Activated CD4-positive, alpha-beta T cell treated with anti-CD3 and anti-CD28 coated beads for 36 hours (primary cell): ENCODE measurements at regions of chr14 and their contacts with region 1.

Region 1: GRCh38 chr14:96741151-96741977 is 55.8 kb upstream of the VRK1 start:
- DNase-seq: peak; percentile 88
- ATAC-seq: peak; percentile 90
- H3K4me3 Mint-ChIP-seq: peak overlapping the region; percentile 47
- H3K27ac Mint-ChIP-seq: no peak overlapping the region
- H3K4me1 Mint-ChIP-seq: no peaks in the 10 kb centered on the region
- H3K27me3 Mint-ChIP-seq: peaks cover 50% of the 10 kb centered on the region

Region 2: DNA sequence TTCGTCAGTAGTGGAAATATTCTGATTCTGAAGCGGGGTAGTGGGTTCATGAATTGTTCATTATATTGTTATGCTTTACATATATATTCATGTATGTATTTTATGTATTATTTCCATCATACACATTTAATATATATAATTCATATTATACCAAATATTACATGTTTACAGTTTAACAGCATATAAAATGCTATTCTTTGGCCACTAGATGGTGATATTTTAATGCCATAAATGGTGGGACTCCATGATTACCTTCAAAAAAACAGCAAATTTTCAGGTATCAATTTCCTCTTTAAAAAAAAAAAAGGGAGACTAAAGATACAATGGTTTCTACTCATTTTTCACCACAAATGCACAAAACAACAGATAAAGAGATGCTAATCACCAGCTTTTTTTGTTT is 444.4 kb before region 1 on chr14:
- CTCF ChIA-PET with region 1: no interaction called
- POLR2A ChIA-PET with region 1: no interaction called
- intact Hi-C with region 1: loop called in 1 of 2 experiments (anchors 5 kb)
- DNase-seq: no peak
- ATAC-seq: no peak
- H3K4me3 Mint-ChIP-seq: no peak overlapping the region
- H3K27ac Mint-ChIP-seq: no peak overlapping the region
- H3K4me1 Mint-ChIP-seq: no peaks in the 10 kb centered on the region
- H3K27me3 Mint-ChIP-seq: no peaks in the 10 kb centered on the region

Region 3: DNA sequence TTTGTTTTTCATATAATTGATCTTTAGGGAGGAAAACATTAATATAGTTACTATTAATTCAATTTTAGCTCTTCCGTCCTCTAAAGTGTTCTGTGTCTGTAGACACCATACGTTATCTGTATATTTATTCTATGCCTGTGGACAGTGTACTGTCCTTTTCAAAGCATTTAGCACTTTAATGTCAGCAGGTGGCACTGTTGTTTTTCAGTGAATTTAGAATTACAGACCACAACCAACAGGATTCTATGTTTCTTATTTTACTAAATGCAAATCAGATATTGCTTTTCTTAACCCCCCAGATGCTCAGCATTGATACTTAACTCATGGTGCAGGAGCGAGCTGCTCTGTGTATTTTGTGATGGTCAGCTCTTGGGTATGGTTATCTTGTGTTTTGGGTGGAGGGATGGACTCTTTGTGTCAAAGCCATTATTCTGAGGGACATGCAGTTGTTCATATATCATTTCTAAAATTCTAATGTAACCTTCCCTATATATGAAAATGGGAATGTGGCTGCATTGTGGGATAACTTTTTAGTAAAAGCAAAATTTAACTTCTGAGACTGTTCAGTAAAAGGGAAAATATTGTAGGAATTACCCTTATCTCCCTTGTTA is 174.0 kb before region 1 on chr14:
- CTCF ChIA-PET with region 1: interaction called, 4 read pairs
- POLR2A ChIA-PET with region 1: no interaction called
- intact Hi-C with region 1: loop called (anchors 1 to 5 kb)
- DNase-seq: no peak
- ATAC-seq: peak; percentile 58
- H3K4me3 Mint-ChIP-seq: no peak overlapping the region
- H3K27ac Mint-ChIP-seq: no peak overlapping the region
- H3K4me1 Mint-ChIP-seq: no peaks in the 10 kb centered on the region
- H3K27me3 Mint-ChIP-seq: no peaks in the 10 kb centered on the region

Region 4: GRCh38 chr14:96584199-96584906 is 157.0 kb before region 1 on chr14:
- CTCF ChIA-PET with region 1: interaction called, 5 read pairs
- POLR2A ChIA-PET with region 1: no interaction called
- intact Hi-C with region 1: loop called (anchors 1 to 5 kb)
- DNase-seq: peak; percentile 63
- ATAC-seq: peak; percentile 79
- H3K4me3 Mint-ChIP-seq: no peak overlapping the region
- H3K27ac Mint-ChIP-seq: no peak overlapping the region
- H3K4me1 Mint-ChIP-seq: no peaks in the 10 kb centered on the region
- H3K27me3 Mint-ChIP-seq: peaks cover 12% of the 10 kb centered on the region